Activated naive CD4-positive, alpha-beta T cell treated with anti-CD3 and anti-CD28 coated beads for 36 hours (primary cell): ENCODE measurements at regions of chr6 and their contacts with region 1.

Region 1: GRCh38 chr6:126339796-126340609 is at the start of gene CENPW:
- DNase-seq: peak; percentile 98
- H3K4me3 Mint-ChIP-seq: no peak within 1 kb of the TSS
- H3K27ac Mint-ChIP-seq: no peak within 1 kb of the TSS
- H3K4me1 Mint-ChIP-seq: peaks cover 14% of the 10 kb centered on the region
- H3K27me3 Mint-ChIP-seq: no peaks in the 10 kb centered on the region
- total RNA-seq, gene CENPW: 77.8 to 85.8 TPM

Region 2: GRCh38 chr6:125323376-125323775 is 1016.6 kb before region 1 on chr6:
- CTCF ChIA-PET with region 1: no interaction called
- intact Hi-C with region 1: loop called (anchors 5 kb)
- DNase-seq: no peak
- H3K4me3 Mint-ChIP-seq: no peak overlapping the region
- H3K27ac Mint-ChIP-seq: no peak overlapping the region
- H3K4me1 Mint-ChIP-seq: no peaks in the 10 kb centered on the region
- H3K27me3 Mint-ChIP-seq: no peaks in the 10 kb centered on the region

Region 3: DNA sequence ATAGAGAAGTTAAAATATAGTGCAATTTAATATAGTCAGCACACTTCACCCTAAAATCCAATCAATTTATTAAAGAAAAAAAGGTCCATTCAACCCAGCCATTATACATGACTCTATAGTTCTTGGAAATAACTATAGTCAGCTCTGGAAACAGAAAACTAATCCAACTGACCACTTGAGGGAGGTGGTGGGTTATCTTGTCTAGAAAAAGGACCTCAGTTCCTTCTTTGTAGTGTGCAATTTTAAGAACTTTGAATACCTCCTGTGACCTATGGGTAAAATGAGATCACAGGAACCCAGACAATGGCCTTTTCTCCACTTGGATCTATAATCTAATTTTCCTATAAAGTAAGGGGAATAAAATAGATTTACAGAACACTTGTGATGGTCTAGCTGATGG is 163.7 kb before region 1 on chr6:
- CTCF ChIA-PET with region 1: no interaction called
- intact Hi-C with region 1: loop called (anchors 2 kb)
- DNase-seq: no peak
- H3K4me3 Mint-ChIP-seq: no peak overlapping the region
- H3K27ac Mint-ChIP-seq: no peak overlapping the region
- H3K4me1 Mint-ChIP-seq: peaks cover 2% of the 10 kb centered on the region
- H3K27me3 Mint-ChIP-seq: no peaks in the 10 kb centered on the region

Region 4: GRCh38 chr6:127266178-127266891 is 926.3 kb after region 1 on chr6 and contains the start of gene RNF146:
- CTCF ChIA-PET with region 1: no interaction called
- intact Hi-C with region 1: loop called (anchors 2 kb)
- DNase-seq: peak; percentile 74
- H3K4me3 Mint-ChIP-seq: peak within 1 kb of the TSS; percentile 100
- H3K27ac Mint-ChIP-seq: peak within 1 kb of the TSS; percentile 100
- H3K4me1 Mint-ChIP-seq: peaks cover 25% of the 10 kb centered on the region
- H3K27me3 Mint-ChIP-seq: no peaks in the 10 kb centered on the region
- total RNA-seq, gene RNF146: 9.7 to 10.8 TPM